ENCODE measurements at regions of chr3 and their contacts with region 1.

Region 1: GRCh38 chr3:4524088-4525023 is 31.2 kb downstream of the ITPR1 start:
- DNase-seq: no peak
- ATAC-seq: no peak
- H3K4me3 ChIP-seq: no peak overlapping the region
- H3K4me3 Mint-ChIP-seq: no peak overlapping the region
- H3K27ac ChIP-seq: no peak overlapping the region
- H3K27ac Mint-ChIP-seq: no peak overlapping the region
- H3K4me1 ChIP-seq: peaks cover 5% of the 10 kb centered on the region
- H3K4me1 Mint-ChIP-seq: peaks cover 35% of the 10 kb centered on the region
- H3K27me3 ChIP-seq: no peaks in the 10 kb centered on the region
- H3K27me3 Mint-ChIP-seq: no peaks in the 10 kb centered on the region
- CTCF ChIP-seq: no peak

Region 2: GRCh38 chr3:4504340-4505261 is 19.8 kb before region 1 on chr3:
- CTCF ChIA-PET with region 1: interaction called, 7 read pairs
- POLR2A ChIA-PET with region 1: interaction called, 5 read pairs
- intact Hi-C with region 1: loop called in 1 of 2 experiments (anchors 1 kb)
- DNase-seq: peak in 6 of 9 experiments; percentile 36 to 85 (median 56)
- ATAC-seq: peak; percentile 78
- H3K4me3 ChIP-seq: peak overlapping the region; percentile 47 to 48
- H3K4me3 Mint-ChIP-seq: peak overlapping the region; percentile 88
- H3K27ac ChIP-seq: peak overlapping the region; percentile 36 to 83
- H3K27ac Mint-ChIP-seq: peak overlapping the region; percentile 94
- H3K4me1 ChIP-seq: peaks cover 20% of the 10 kb centered on the region
- H3K4me1 Mint-ChIP-seq: peaks cover 60% of the 10 kb centered on the region
- H3K27me3 ChIP-seq: no peaks in the 10 kb centered on the region
- H3K27me3 Mint-ChIP-seq: no peaks in the 10 kb centered on the region
- CTCF ChIP-seq: no peak